ENCODE measurements at regions of chr4 and their contacts with region 1.

Region 1: DNA sequence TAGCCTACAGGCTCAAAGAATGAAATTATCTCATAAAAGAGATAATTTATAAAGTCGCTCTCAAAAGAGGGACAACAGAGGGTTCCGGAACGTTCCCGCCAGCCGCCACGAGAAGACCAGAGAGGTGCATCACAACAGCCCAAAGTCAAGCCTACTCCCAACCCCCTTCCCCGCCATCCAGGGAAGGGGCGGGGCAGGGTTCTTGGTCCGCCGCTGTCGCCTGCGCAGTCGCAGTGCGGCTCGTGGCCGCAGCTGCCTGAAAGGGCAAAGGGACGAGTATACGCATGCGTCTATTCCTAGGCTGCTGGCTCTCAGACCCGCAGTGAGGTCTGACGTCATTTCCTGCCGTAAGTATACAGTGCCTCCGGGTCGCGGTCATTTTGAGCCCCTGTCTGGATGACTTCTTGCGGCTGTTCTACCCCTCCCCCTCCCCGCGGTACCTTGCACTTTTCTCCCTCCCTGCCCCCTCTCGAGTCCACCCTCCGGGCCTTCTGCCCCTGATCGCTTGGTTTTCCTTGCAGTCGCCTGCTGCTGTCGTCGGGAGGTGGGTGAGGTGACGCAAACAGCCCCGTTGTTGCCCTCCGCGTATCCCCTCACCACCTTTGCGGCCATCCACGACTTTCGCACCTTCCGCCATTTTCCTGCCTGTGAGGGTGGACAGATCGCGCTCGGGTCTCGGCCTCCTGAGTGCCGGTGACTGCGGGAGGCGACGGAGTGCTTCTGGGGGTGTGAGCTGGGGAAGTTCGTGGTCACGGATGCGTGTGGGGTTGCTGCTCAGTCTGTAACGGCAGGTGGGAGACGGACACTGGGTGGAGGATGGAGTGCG is at the start of gene OCIAD1:
- DNase-seq: peak; percentile 99
- H3K4me3 ChIP-seq: peak within 1 kb of the TSS; percentile 64 to 96 (median 66)
- H3K27ac ChIP-seq: peak within 1 kb of the TSS; percentile 95
- H3K4me1 ChIP-seq: peaks cover 10% of the 10 kb centered on the region
- H3K27me3 ChIP-seq: no peaks in the 10 kb centered on the region
- CTCF ChIP-seq: no peak
- POLR2A ChIP-seq: peak; percentile 81
- total RNA-seq, gene OCIAD1: 99.9 and 101 TPM in 2 replicates

Region 2: GRCh38 chr4:48594180-48594579 is 236.7 kb before region 1 on chr4:
- CTCF ChIA-PET with region 1: no interaction called
- POLR2A ChIA-PET with region 1: no interaction called
- dilution Hi-C with region 1: no loop called
- intact Hi-C with region 1: loop called (anchors 1 kb)
- DNase-seq: peak; percentile 88
- H3K4me3 ChIP-seq: peak overlapping the region in 1 of 3 experiments; percentile 33
- H3K27ac ChIP-seq: peak overlapping the region; percentile 31
- H3K4me1 ChIP-seq: peaks cover 47% of the 10 kb centered on the region
- H3K27me3 ChIP-seq: no peaks in the 10 kb centered on the region
- CTCF ChIP-seq: no peak
- POLR2A ChIP-seq: no peak

Region 3: DNA sequence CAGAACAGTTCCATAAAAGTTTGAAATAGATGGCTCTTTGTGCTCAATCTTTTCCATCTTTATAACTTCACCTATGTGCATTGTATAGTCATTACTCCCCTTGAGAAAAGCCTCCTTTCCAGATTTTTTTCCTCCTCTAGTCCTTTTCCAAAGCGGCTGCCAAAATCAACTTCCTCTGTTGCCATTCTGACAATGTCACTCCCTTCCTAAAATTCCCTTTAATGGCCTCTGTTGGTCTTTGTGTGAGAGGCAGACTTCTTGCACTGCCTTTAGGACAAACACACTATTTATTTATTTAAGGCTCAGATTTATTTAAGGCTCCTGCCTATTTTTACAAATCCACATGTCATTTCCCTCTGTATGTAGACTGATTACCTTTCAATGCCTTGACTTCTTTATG is 29.2 kb before region 1 on chr4:
- CTCF ChIA-PET with region 1: no interaction called
- POLR2A ChIA-PET with region 1: no interaction called
- dilution Hi-C with region 1: no loop called
- intact Hi-C with region 1: loop called (anchors 1 kb)
- DNase-seq: peak; percentile 94
- H3K4me3 ChIP-seq: peak overlapping the region in 1 of 3 experiments; percentile 19
- H3K27ac ChIP-seq: peak overlapping the region; percentile 43
- H3K4me1 ChIP-seq: peaks cover 36% of the 10 kb centered on the region
- H3K27me3 ChIP-seq: no peaks in the 10 kb centered on the region
- CTCF ChIP-seq: no peak
- POLR2A ChIP-seq: no peak

Region 4: DNA sequence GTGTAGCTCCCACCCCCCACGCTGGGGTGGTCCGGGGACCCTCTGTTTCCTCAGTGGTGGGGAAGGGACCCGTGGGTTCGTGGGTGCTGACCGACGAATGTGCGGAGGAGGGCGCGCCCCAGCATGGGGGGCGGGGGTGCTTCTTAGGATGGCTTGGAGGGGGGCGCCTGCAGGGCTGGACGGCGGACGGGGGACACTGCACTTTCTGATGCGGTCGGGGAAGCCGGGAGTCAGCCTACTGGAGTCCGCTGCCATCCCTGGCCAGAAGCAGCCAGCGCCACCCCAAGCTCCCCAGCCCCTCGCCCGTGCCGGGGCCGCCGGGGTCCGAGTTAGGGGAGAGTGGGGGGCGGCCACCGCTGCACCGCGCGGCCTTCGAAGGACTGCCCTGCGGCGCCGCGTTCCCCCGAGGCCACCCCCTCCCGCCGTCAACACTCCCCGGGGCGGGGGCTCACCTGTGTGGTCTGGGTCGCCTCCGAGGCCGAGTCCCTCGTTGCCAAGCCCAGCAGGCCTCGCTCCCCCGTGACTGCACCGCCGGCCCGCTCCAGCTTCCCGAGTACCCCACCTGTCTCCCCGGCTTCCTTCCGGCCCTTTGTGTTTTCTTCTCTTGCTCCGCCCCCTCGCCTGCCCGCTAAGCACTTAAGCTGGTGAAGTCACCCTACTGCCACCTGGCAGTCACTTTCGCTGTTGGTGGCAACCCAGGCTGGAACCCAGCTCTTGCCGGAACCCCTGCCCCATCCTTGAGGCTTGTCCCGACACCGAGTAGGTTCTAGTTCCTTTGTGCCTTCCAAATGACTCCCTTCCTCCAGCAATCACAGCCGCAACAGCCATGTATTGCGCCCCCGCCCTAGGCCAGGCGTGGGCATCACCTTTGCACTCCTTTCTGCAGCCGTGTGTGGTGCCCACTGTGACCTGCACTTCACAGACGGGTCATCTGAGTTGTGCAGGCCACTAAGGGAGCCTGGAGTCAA is 75.6 kb after region 1 on chr4 and contains the start of gene OCIAD2:
- CTCF ChIA-PET with region 1: no interaction called
- POLR2A ChIA-PET with region 1: no interaction called
- dilution Hi-C with region 1: no loop called
- intact Hi-C with region 1: loop called (anchors 2 kb)
- DNase-seq: peak; percentile 70
- H3K4me3 ChIP-seq: peak within 1 kb of the TSS; percentile 57 to 65 (median 61)
- H3K27ac ChIP-seq: peak within 1 kb of the TSS; percentile 82
- H3K4me1 ChIP-seq: peaks cover 28% of the 10 kb centered on the region
- H3K27me3 ChIP-seq: no peaks in the 10 kb centered on the region
- CTCF ChIP-seq: no peak
- POLR2A ChIP-seq: peak; percentile 23
- total RNA-seq, gene OCIAD2: 99.0 and 123 TPM in 2 replicates

Measured in endothelial cell of umbilical vein (primary cell).